ENCODE measurements at regions of chr21 and their contacts with region 1.

Region 1: GRCh38 chr21:28793043-28793442 is 199.6 kb downstream of the LTN1 start:
- DNase-seq: peak; percentile 49
- ATAC-seq: peak; percentile 25; the same call in 1 of the 2 replicates
- H3K4me3 ChIP-seq: no peak overlapping the region
- H3K27ac ChIP-seq: no peak overlapping the region
- H3K4me1 ChIP-seq: peaks cover 23% of the 10 kb centered on the region
- H3K27me3 ChIP-seq: no peaks in the 10 kb centered on the region
- CTCF ChIP-seq: peak; percentile 66

Region 2: GRCh38 chr21:28537371-28538079 is 255.5 kb before region 1 on chr21:
- CTCF ChIA-PET with region 1: no interaction called
- POLR2A ChIA-PET with region 1: no interaction called
- intact Hi-C with region 1: loop called (anchors 5 kb)
- DNase-seq: peak; percentile 99
- ATAC-seq: peak; percentile 44
- H3K4me3 ChIP-seq: no peak overlapping the region
- H3K27ac ChIP-seq: peak overlapping the region; percentile 97
- H3K4me1 ChIP-seq: peaks cover 52% of the 10 kb centered on the region
- H3K27me3 ChIP-seq: no peaks in the 10 kb centered on the region
- CTCF ChIP-seq: no peak

Region 3: DNA sequence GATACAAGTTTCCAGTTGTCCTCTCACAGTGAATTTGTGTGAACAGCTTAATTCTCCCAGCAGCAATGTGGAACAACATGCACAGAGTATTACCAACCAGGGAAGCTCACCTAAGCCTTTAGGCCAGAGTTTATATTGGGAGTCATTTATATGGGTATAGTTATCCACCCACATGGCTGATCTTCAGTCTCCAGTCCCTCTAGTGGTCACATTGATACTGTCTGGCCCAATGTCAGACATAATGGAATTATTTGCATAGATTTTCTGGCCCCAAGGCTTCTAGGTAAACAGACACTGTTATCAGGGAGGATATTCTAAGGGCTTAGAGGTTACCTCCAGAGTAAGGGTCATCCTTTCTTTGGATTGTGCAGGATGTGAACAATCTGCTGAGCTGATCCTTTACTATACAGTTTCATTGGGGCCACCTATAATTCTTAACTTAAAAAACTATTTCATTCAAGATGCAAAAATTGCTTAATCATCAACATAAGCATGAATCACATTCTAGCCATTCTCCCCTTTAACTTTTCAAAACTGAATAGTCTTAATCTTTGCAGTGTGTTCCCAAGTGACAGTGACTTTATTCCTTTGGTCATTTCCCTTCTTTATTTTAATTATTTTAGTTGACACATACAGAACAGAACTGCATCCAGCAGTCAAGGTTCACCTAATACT is 11.3 kb before region 1 on chr21:
- CTCF ChIA-PET with region 1: no interaction called
- POLR2A ChIA-PET with region 1: no interaction called
- intact Hi-C with region 1: loop called (anchors 2 kb)
- DNase-seq: peak; percentile 72
- ATAC-seq: peak; percentile 75
- H3K4me3 ChIP-seq: no peak overlapping the region
- H3K27ac ChIP-seq: no peak overlapping the region
- H3K4me1 ChIP-seq: no peaks in the 10 kb centered on the region
- H3K27me3 ChIP-seq: no peaks in the 10 kb centered on the region
- CTCF ChIP-seq: peak; percentile 85

Region 4: GRCh38 chr21:28871388-28872010 is 78.5 kb after region 1 on chr21:
- CTCF ChIA-PET with region 1: no interaction called
- POLR2A ChIA-PET with region 1: no interaction called
- intact Hi-C with region 1: loop called (anchors 1 kb)
- DNase-seq: no peak
- ATAC-seq: peak; percentile 44
- H3K4me3 ChIP-seq: no peak overlapping the region
- H3K27ac ChIP-seq: no peak overlapping the region
- H3K4me1 ChIP-seq: no peaks in the 10 kb centered on the region
- H3K27me3 ChIP-seq: no peaks in the 10 kb centered on the region
- CTCF ChIP-seq: no peak

Region 5: DNA sequence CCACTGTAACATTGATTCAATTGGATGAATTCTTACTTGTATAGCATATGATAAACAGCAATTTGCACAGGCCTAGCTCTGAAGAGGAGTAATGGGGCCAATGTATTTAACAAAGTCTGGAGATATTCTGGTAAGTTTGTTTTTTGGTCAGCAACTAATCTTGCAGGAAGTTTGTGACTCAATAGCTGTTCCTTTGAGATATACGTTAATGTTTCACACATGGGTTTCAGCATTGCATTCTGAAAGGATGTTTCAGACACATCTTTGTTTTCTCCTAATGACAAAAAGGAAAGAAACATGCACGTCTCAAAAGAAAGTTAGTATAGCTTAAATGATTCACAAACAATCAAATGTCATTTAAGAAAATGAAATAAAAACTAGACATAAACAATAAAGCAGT is 150.6 kb after region 1 on chr21:
- CTCF ChIA-PET with region 1: no interaction called
- POLR2A ChIA-PET with region 1: no interaction called
- intact Hi-C with region 1: loop called (anchors 2 kb)
- DNase-seq: no peak
- ATAC-seq: no peak
- H3K4me3 ChIP-seq: no peak overlapping the region
- H3K27ac ChIP-seq: no peak overlapping the region
- H3K4me1 ChIP-seq: no peaks in the 10 kb centered on the region
- H3K27me3 ChIP-seq: no peaks in the 10 kb centered on the region
- CTCF ChIP-seq: no peak

Measured in PC-3 (cell line).